Mucosa of descending colon (tissue), 3 donors: ENCODE measurements at regions of chr1 and their contacts with region 1.

Region 1: DNA sequence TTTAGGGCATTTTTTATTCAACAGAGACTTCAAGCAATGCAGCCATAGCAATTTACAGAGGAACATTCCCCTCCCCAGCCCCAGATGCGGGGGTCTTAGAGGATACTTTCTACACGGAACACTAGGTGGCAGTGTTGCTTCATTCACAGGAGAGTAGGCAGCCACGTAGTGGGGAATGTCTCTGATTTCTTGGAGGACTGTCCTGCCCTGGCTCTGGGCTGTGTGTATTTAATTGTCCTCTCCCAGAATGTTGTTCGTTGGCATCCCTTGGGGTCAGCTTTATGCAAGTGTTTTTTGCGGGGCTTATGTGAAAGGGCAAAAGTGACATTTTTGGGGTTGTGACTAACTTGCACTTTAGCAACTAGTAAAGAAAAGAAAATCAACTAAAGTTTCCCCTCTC is 96.9 kb downstream of the PAPPA2 start:
- DNase-seq: peak in 1 of 3 donors; percentile 42
- ATAC-seq: peak; percentile 65
- H3K4me3 ChIP-seq: no peak overlapping the region
- H3K4me1 ChIP-seq: no peaks in the 10 kb centered on the region
- CTCF ChIP-seq: peak; percentile 28

Region 2: GRCh38 chr1:176066709-176067108 is 493.2 kb before region 1 on chr1:
- intact Hi-C with region 1: no loop called
- DNase-seq: no peak
- ATAC-seq: no peak
- H3K4me3 ChIP-seq: no peak overlapping the region
- H3K4me1 ChIP-seq: no peaks in the 10 kb centered on the region
- CTCF ChIP-seq: no peak

Region 3: DNA sequence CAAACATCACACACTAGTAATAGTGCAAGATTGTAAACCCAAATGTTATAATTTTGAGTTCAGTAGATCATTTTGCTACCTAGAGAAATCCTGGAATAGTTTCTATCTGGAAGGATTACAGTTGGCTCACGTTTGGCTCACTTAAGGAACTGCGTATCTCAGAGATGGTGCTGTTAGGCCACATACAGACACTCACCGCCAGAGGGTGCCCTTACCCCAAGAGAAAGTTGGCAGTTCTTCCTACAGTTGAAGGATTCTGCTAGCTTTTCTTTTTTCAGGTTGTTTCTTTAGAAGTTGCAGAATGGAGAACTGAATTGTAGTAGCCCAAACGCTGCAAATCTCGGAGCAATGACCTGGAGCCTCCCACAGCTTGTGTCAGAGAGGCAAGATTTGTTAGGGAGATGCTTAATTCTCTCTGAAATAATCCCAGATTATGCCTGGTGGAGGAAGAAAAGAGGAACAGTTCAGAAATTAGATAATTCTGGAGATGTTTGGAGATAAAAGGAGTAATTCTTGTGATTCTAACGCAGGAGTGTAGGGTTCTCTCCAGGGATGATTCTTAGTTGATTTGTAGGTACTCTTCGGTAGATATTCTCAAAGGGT is 184.8 kb before region 1 on chr1:
- intact Hi-C with region 1: loop called in 1 of 2 experiments (anchors 10 kb)
- DNase-seq: peak in 2 of 3 donors; percentile 74 to 82
- ATAC-seq: peak; percentile 81
- H3K4me3 ChIP-seq: no peak overlapping the region
- H3K4me1 ChIP-seq: no peaks in the 10 kb centered on the region
- CTCF ChIP-seq: peak; percentile 64

Region 4: GRCh38 chr1:176837708-176838107 is 277.8 kb after region 1 on chr1:
- intact Hi-C with region 1: loop called (anchors 10 kb)
- DNase-seq: no peak
- ATAC-seq: no peak
- H3K4me3 ChIP-seq: no peak overlapping the region
- H3K4me1 ChIP-seq: no peaks in the 10 kb centered on the region
- CTCF ChIP-seq: no peak

Region 5: DNA sequence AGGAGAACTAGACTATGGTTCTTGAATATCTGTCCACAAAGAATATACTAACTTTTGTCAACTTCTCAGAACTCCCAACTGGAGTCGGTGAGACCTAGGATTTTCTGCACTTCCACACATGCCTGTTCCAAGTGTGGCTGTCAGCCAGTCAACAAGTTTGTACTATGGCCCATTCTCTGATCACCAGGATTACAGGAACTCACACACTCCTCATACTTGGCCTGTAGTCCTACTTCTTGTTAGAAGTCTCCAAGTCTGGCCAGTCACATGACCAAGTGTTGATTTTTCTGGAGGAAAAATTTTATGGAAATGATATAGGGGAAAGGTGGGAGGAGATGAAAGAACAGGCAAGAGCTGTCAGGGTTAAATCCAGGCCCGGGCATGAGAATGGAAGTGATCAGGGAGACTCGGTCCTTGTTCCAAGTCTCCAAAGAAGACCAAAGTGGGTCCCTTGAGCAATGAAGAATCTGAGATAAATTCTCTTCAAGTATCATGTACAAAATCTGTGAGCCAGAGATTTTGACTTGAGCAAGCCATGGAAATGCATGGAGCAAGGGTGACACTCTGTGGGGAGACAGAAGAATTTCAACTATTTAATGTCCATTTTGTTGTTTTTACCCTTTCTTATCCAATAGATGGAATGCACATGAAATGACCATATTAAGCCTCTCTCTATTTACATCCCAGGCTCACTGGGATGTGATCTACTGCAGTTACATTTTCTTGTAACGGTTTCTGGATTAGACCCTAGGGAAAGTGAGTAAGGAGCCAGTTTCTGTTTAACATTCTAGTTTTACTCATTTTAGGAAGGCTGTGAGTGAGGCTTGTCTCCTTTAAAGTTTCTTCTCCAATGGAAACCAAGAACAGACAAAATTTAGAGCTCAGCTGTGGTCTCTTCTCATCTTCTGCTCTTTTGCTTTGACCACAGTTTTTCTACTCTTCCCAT is 283.7 kb after region 1 on chr1:
- intact Hi-C with region 1: loop called (anchors 10 kb)
- DNase-seq: no peak
- ATAC-seq: no peak
- H3K4me3 ChIP-seq: no peak overlapping the region
- H3K4me1 ChIP-seq: no peaks in the 10 kb centered on the region
- CTCF ChIP-seq: no peak